Dorsolateral prefrontal cortex (tissue), 120 donors: ENCODE measurements at regions of chr3 and their contacts with region 1.

Region 1: GRCh38 chr3:66407611-66408218 is 93.1 kb downstream of the LRIG1 start:
- DNase-seq: peak in 9 of 10 donors; percentile 52 to 83 (median 73)
- H3K4me3 ChIP-seq: no peak overlapping the region
- H3K27ac ChIP-seq: peak overlapping the region in 54 of 59 donors; percentile 14 to 93 (median 82)
- H3K27me3 ChIP-seq: no peaks in the 10 kb centered on the region
- CTCF ChIP-seq: peak; percentile 51 to 97 (median 89)

Region 2: DNA sequence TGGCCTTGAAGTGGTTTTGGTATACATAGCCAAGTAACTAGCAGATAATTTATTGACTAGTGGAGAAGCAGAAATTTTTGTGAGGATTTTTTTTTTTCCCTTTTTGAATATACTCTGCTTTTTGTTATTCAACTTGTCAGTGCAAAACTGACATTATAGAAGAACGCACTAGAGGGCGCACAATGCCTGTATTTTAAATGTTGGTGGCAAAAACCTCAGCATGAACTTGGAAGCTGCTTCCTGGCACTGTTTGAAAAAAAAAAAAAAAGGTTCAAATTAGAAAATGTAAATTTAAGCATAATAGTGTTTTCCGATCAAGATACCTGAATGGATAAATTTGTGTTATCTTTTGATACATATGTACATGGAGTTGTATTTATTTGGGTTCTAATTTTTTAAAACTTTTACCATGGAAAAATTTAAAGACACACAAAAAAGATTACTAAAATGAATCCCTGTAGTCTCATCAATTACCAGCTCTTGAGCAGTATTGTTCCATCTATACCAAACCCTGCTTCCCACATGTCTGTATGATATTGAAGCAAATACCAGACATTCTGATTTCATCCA is 130.9 kb before region 1 on chr3:
- intact Hi-C with region 1: loop called (anchors 10 kb)
- DNase-seq: peak in 5 of 10 donors; percentile 31 to 79 (median 60)
- H3K4me3 ChIP-seq: no peak overlapping the region
- H3K27ac ChIP-seq: peak overlapping the region in 2 of 59 donors; percentile 16
- H3K27me3 ChIP-seq: no peaks in the 10 kb centered on the region
- CTCF ChIP-seq: peak; percentile 67 to 93 (median 82)

Region 3: GRCh38 chr3:66353530-66353929 is 54.2 kb before region 1 on chr3:
- intact Hi-C with region 1: loop called in 1 of 2 experiments (anchors 5 kb)
- DNase-seq: no peak
- H3K4me3 ChIP-seq: no peak overlapping the region
- H3K27ac ChIP-seq: no peak overlapping the region
- H3K27me3 ChIP-seq: no peaks in the 10 kb centered on the region
- CTCF ChIP-seq: no peak

Region 4: GRCh38 chr3:66483406-66483906 is 75.7 kb after region 1 on chr3:
- intact Hi-C with region 1: loop called in 1 of 2 experiments (anchors 2 kb)
- DNase-seq: peak in 9 of 10 donors; percentile 34 to 63 (median 46)
- H3K4me3 ChIP-seq: peak overlapping the region in 47 of 59 donors; percentile 0 to 58 (median 28)
- H3K27ac ChIP-seq: peak overlapping the region; percentile 63 to 98 (median 93)
- H3K27me3 ChIP-seq: no peaks in the 10 kb centered on the region
- CTCF ChIP-seq: peak in 6 of 56 donors; percentile 0 to 14 (median 6)

Region 5: DNA sequence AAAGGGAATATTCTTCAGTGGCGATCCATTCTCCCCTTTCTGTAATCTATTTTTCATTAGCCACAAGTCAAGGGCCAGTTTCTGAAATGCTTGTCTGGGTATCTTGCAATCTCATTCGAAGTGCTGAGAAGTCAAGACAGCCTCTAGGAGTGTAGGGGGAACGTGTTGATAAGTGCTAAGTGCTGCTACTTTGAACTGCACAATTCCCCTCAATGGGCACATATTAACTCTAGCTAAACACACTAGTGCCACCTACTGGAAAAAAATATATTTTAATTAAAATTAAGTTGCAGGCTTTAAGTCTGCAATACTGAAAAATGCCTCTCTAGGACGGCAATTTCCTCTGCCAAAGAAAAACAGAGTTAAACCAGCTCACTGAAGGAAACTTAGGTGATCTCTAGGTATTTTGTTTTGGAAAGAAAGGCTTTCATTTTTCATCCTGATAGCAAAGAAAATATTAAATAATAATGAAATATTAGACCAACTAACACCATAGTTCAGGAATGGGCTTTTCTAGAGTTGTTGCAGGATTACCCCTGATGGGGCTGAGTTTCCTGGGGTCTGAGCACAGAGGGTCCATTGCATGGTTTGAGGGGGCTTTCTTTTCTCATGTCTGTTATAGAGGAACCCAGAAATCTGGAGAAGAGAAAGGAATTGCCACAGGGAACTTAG is 408.5 kb after region 1 on chr3:
- intact Hi-C with region 1: loop called (anchors 5 kb)
- DNase-seq: no peak
- H3K4me3 ChIP-seq: no peak overlapping the region
- H3K27ac ChIP-seq: no peak overlapping the region
- H3K27me3 ChIP-seq: no peaks in the 10 kb centered on the region
- CTCF ChIP-seq: peak; percentile 51 to 90 (median 76)

Region 6: GRCh38 chr3:66822186-66823008 is 414.7 kb after region 1 on chr3:
- intact Hi-C with region 1: loop called (anchors 5 kb)
- DNase-seq: peak in 5 of 10 donors; percentile 35 to 60 (median 48)
- H3K4me3 ChIP-seq: no peak overlapping the region
- H3K27ac ChIP-seq: no peak overlapping the region
- H3K27me3 ChIP-seq: no peaks in the 10 kb centered on the region
- CTCF ChIP-seq: peak; percentile 33 to 77 (median 62)